Mammary epithelial cell (primary cell): ENCODE measurements at regions of chr2 and their contacts with region 1.

Region 1: GRCh38 chr2:75375646-75376582 is 176.6 kb upstream of the TACR1 start:
- DNase-seq: peak; percentile 51
- H3K4me3 ChIP-seq: no peak overlapping the region
- H3K27ac ChIP-seq: no peak overlapping the region
- H3K4me1 ChIP-seq: peaks cover 26% of the 10 kb centered on the region
- H3K27me3 ChIP-seq: no peaks in the 10 kb centered on the region
- CTCF ChIP-seq: no peak

Region 2: GRCh38 chr2:75098856-75099255 is 277.1 kb before region 1 on chr2:
- CTCF ChIA-PET with region 1: no interaction called
- dilution Hi-C with region 1: no loop called
- in situ Hi-C with region 1: loop called in 1 of 2 experiments (anchors 25 kb)
- intact Hi-C with region 1: no loop called
- DNase-seq: peak; percentile 4
- H3K4me3 ChIP-seq: no peak overlapping the region
- H3K27ac ChIP-seq: no peak overlapping the region
- H3K4me1 ChIP-seq: peaks cover 19% of the 10 kb centered on the region
- H3K27me3 ChIP-seq: no peaks in the 10 kb centered on the region
- CTCF ChIP-seq: peak; percentile 49 to 50

Region 3: DNA sequence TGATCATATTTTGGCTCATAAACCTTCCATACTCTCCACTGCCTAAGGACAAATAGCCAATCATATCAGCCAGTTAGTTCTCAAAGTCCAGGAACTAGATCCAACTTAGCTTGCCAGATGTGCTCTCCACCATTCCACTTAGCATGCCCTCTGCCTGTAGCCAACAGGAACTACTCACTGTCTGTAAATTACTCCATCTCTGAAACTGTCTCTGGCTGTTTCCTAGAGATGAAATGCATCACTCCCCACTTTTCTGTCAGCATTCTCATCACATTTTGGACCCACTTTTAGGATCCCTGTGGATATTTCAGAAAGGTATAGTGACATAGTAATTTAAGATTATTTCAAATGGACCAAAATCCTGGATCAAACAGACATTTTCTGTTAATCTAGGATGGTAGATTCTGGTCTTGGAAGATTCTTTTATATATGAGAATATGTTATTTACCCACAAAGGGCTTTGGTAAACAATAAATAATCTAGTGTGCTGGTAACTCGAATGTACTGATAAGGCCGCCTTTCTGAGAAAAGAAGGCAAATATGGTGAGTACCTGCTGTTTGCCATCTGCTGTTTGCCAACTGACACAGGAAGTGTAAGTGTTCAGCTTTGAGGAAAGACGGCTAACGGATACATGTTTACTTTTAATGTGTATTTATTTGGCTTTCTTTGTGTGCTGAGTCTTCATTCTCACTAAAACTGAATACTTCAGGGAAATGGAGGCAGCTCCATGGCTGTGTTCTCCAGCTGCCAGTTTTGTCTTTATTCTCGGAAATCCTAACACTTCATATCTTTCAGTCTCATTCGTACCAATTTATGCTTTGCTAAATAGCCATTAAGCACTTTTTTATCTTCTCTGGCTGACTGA is 105.3 kb after region 1 on chr2:
- CTCF ChIA-PET with region 1: no interaction called
- dilution Hi-C with region 1: no loop called
- in situ Hi-C with region 1: no loop called
- intact Hi-C with region 1: no loop called
- DNase-seq: peak; percentile 12
- H3K4me3 ChIP-seq: no peak overlapping the region
- H3K27ac ChIP-seq: no peak overlapping the region
- H3K4me1 ChIP-seq: no peaks in the 10 kb centered on the region
- H3K27me3 ChIP-seq: no peaks in the 10 kb centered on the region
- CTCF ChIP-seq: peak; percentile 47 to 48